ENCODE measurements at regions of chr5 and their contacts with region 1.

Region 1: GRCh38 chr5:104178829-104179456 is 616.4 kb upstream of the NUDT12 start:
- DNase-seq: no peak
- H3K4me3 ChIP-seq: no peak overlapping the region
- CTCF ChIP-seq: peak; percentile 52

Region 2: DNA sequence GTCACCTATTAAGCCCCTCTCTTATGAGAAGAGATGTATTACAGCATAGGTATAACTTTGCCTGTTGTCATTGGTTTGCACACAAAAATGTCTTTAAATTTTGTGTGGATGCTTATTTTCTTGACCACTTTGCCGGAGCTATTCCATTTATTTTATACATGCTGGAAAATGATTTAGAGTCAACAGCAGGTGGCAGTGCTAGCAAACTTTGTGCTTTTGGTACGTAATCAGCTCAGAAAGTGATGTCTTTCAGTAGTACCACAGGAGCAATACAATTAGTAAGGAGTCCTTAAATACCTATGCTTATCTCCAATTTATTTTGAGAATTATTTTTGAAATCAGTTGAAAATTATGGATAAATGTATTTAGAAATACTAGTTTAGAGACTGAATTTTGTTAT is 596.6 kb before region 1 on chr5:
- CTCF ChIA-PET with region 1: interaction called, 176 read pairs
- POLR2A ChIA-PET with region 1: no interaction called
- DNase-seq: no peak
- H3K4me3 ChIP-seq: no peak overlapping the region
- CTCF ChIP-seq: peak; percentile 36

Region 3: DNA sequence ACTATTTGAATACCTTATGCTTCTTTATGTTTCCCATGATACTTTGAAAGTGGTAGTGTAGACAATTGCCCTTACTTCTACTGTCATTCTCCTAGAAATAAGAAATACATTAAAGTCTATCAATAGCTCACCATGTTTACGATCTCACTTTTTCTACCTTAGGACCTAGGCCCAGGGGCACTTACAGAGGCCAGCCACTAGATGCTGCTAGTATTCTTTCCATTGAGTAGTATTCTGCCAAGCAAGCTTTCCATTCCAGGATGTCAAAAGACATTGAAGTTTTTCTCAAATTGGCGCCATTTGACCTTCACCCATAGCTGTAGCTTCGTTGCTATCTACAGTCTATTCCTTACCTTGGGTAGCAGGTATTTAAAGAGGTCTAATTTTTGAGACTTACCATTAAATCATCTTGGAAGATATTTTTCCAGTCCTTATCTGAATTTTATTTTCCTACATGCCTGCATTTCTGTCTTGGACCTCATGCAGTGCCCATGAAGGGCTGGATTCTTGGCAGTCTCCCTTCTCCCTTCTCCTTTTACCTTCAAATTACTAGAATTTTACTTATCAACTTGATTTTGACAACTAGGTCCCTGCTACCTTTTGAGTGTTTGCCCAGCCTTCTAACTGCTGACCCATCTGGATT is 370.4 kb before region 1 on chr5:
- CTCF ChIA-PET with region 1: interaction called, 122 read pairs
- POLR2A ChIA-PET with region 1: no interaction called
- DNase-seq: no peak
- H3K4me3 ChIP-seq: no peak overlapping the region
- CTCF ChIP-seq: peak; percentile 84

Region 4: GRCh38 chr5:103829585-103829984 is 349.4 kb before region 1 on chr5:
- CTCF ChIA-PET with region 1: interaction called, 15 read pairs
- POLR2A ChIA-PET with region 1: no interaction called
- DNase-seq: no peak
- H3K4me3 ChIP-seq: no peak overlapping the region
- CTCF ChIP-seq: no peak

Region 5: DNA sequence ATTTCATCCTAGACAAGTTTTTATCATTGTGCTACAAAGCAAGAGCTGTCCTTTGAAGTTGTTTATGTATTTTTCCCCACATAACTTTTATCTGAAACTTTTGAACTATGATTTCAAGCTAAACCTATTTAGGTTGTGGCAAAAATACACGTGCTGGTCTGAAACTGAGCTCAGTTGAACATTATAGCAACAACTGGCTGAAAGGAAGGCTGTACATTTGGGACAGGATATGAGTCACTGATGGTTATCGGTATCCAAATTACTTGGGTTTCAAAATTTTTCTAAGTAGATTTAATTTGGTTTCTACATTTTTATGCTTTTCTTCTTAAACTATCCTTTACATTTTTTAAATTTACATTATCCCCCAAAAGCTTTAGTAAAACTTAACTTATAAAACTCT is 11.0 kb after region 1 on chr5:
- CTCF ChIA-PET with region 1: interaction called, 18 read pairs
- POLR2A ChIA-PET with region 1: no interaction called
- DNase-seq: peak; percentile 57
- H3K4me3 ChIP-seq: no peak overlapping the region
- CTCF ChIP-seq: no peak

Region 6: GRCh38 chr5:105088961-105089360 is 910.0 kb after region 1 on chr5:
- CTCF ChIA-PET with region 1: no interaction called
- POLR2A ChIA-PET with region 1: no interaction called
- DNase-seq: no peak
- H3K4me3 ChIP-seq: no peak overlapping the region
- CTCF ChIP-seq: no peak

Measured in AG04449 (cell line).